SK-N-SH (cell line): ENCODE measurements at regions of chr15 and their contacts with region 1.

Region 1: DNA sequence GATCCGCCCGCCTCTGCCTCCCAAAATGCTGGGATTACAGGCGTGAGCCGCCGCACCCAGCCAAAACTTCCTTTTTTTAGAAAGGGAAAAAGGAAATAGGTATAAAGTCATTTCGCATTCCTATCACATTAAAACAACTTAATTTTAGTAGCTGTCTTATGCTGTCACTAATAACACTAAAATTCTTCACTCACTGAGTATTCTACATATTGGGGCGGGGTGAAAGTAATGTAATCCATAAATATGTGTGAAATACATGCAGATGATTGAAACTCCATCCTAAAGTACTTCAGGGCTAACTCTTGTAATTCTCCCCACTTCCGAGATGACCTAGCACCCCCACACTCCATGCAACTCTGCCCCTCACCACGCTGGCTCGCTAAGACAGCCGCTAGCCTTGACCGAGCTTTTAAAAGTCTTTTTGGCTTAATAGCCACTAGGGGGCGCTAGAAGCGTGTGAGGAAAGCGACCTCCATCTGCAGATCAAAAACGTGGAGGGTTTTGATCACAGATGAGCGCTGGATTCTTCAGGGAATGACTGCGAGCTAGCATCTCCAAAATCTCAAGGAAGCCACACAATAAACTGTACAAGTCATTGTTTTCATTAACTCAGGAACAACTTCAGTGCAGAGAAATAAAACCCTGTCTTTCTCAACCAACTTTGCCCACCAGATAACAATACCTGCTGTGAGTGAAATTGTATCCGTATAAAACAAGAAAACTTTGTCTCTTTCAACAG is 129.3 kb upstream of the IGF1R start:
- DNase-seq: peak; percentile 79
- H3K4me3 ChIP-seq: peak overlapping the region in 1 of 2 experiments; percentile 49; a peak in 2 of 4 replicates
- H3K27ac ChIP-seq: no peak overlapping the region
- H3K4me1 ChIP-seq: no peaks in the 10 kb centered on the region
- H3K27me3 ChIP-seq: no peaks in the 10 kb centered on the region
- CTCF ChIP-seq: peak; percentile 85
- EP300 ChIP-seq: no peak
- RAD21 ChIP-seq: peak; percentile 86

Region 2: DNA sequence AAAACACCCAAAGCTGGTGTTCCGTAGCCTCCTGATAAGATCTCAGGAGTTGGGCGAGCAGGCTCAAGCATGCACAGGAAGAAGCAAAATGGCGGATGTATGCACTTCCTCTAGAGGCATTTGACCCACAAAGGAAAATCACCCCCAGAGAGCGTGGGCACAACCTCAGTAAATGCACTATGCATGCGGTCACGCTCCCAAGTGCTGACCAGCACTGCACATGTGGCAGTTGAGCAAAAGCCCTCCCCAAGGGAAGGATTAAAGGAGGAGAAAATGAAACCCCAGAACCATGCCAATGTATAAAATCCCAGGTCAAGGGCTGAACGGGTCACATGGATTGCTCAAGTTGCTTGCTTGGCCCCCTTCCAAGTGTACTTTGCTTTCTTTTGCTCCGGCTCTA is 160.0 kb before region 1 on chr15:
- CTCF ChIA-PET with region 1: no interaction called
- POLR2A ChIA-PET with region 1: no interaction called
- DNase-seq: no peak
- H3K4me3 ChIP-seq: no peak overlapping the region
- H3K27ac ChIP-seq: no peak overlapping the region
- H3K4me1 ChIP-seq: no peaks in the 10 kb centered on the region
- H3K27me3 ChIP-seq: no peaks in the 10 kb centered on the region
- CTCF ChIP-seq: no peak
- EP300 ChIP-seq: no peak
- RAD21 ChIP-seq: no peak

Region 3: DNA sequence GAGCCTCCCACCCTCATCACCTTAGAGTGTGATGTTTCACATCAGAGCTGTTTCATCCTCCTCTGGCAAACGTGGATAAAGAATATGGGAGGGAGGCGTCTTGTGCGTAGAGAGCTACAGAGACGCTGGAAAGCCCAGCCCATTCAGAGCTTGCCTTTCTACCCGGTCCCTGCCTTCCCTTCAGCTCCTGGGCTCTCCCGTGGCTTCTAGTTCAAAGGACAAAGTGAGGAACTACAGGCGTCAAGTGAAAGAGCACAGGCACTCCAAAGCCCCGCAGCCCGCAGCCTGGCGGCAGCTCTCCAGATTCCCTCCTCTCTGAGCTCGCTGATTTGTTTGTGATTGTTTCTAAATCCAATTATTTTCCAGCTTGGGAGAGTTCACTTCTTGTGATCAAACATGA is 67.8 kb before region 1 on chr15:
- CTCF ChIA-PET with region 1: no interaction called
- POLR2A ChIA-PET with region 1: no interaction called
- DNase-seq: no peak
- H3K4me3 ChIP-seq: no peak overlapping the region
- H3K27ac ChIP-seq: no peak overlapping the region
- H3K4me1 ChIP-seq: no peaks in the 10 kb centered on the region
- H3K27me3 ChIP-seq: 0 out of 2 replicates have a peak, but pooled peaks cover 10% of the 10 kb centered on the region
- CTCF ChIP-seq: no peak
- EP300 ChIP-seq: no peak
- RAD21 ChIP-seq: no peak

Region 4: GRCh38 chr15:98501192-98501591 is 17.8 kb before region 1 on chr15:
- CTCF ChIA-PET with region 1: interaction called, 12 read pairs
- POLR2A ChIA-PET with region 1: no interaction called
- DNase-seq: no peak
- H3K4me3 ChIP-seq: no peak overlapping the region
- H3K27ac ChIP-seq: no peak overlapping the region
- H3K4me1 ChIP-seq: no peaks in the 10 kb centered on the region; a peak in 1 of 4 replicates
- H3K27me3 ChIP-seq: peaks cover 6% of the 10 kb centered on the region; the same call in 1 of the 2 replicates
- CTCF ChIP-seq: no peak
- EP300 ChIP-seq: no peak
- RAD21 ChIP-seq: no peak

Region 5: DNA sequence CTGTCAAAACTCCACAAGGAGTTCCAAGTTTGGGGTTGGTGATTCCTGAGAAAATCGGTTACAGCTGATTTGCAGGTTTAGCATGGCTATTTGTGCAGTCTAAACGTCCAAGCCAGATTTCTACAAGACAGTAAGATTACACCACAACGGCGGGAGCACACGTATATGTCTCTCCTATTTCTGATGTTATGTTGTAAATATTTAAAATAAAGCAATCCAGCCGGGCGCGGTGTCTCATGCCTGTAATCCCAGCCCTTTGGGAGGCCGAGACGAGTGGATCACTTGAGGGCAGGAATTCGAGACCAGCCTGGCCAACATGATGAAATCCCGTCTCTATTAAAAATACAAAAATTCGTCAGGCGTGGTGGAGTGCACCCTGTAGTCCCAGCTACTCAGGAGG is 22.5 kb after region 1 on chr15:
- CTCF ChIA-PET with region 1: interaction called, 16 read pairs
- POLR2A ChIA-PET with region 1: no interaction called
- DNase-seq: no peak
- H3K4me3 ChIP-seq: no peak overlapping the region
- H3K27ac ChIP-seq: no peak overlapping the region
- H3K4me1 ChIP-seq: no peaks in the 10 kb centered on the region
- H3K27me3 ChIP-seq: peaks cover 25% of the 10 kb centered on the region; the same call in 1 of the 2 replicates
- CTCF ChIP-seq: no peak
- EP300 ChIP-seq: no peak
- RAD21 ChIP-seq: no peak

Region 6: DNA sequence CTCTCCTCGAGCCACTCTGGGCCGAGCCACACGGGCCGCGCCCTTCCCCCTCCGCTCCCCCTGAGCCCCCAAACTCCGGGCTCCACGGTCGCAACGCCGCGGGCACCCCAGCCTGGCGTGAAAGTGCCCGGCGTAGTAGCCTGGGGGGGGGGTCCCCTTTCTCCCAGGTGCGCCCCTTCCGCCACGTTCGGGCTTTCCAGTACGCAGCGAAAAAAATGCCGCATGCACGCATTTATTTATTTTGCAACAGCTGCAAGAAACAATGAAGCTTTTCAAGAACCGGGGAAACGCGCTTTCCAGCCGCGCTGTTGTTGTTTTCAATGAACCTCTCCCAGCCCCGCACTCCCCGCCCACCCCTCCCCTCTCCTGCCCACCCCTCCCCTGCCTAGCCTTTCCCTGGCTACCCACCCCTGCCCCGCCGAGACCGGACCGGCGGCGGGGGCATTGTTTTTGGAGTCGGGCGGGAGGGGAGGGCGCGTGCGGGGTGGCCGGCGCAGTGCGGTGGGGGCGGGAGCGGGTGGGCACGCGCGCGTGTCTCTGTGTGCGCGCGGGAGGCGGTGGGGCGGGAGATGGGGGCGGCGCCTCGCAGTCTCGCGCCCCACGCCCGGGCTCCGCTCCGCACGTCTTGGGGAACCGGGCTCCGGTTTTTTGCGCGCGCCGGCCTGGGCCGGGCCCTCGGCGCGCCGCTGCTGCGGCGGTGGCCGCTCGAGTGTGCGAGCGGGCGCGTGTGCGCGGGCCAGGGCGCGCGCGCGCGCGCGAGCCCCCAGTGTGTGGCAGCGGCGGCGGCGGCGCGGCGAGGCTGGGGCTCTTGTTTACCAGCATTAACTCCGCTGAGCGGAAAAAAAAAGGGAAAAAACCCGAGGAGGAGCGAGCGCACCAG is 129.0 kb after region 1 on chr15 and contains the start of gene IGF1R:
- CTCF ChIA-PET with region 1: interaction called, 12 read pairs
- POLR2A ChIA-PET with region 1: no interaction called
- DNase-seq: peak; percentile 94
- H3K4me3 ChIP-seq: peak within 1 kb of the TSS; percentile 78 to 92
- H3K27ac ChIP-seq: peak within 1 kb of the TSS; percentile 76 to 89
- H3K4me1 ChIP-seq: peaks cover 4 to 5% of the 10 kb centered on the region in 2 experiments; a peak in 3 of 4 replicates
- H3K27me3 ChIP-seq: peaks cover 9% of the 10 kb centered on the region; the same call in 1 of the 2 replicates
- CTCF ChIP-seq: no peak
- EP300 ChIP-seq: no peak
- RAD21 ChIP-seq: no peak
- polyA plus RNA-seq, gene IGF1R: 6.4 and 9.5 TPM in 2 replicates

Region 7: GRCh38 chr15:98760112-98760826 is 241.3 kb after region 1 on chr15:
- CTCF ChIA-PET with region 1: no interaction called
- POLR2A ChIA-PET with region 1: no interaction called
- DNase-seq: no peak
- H3K4me3 ChIP-seq: no peak overlapping the region
- H3K27ac ChIP-seq: no peak overlapping the region
- H3K4me1 ChIP-seq: peaks cover 5 to 10% of the 10 kb centered on the region in 2 experiments; a peak in 2 of 4 replicates
- H3K27me3 ChIP-seq: no peaks in the 10 kb centered on the region
- CTCF ChIP-seq: no peak
- EP300 ChIP-seq: no peak
- RAD21 ChIP-seq: no peak

Region 8: GRCh38 chr15:98845107-98845884 is 326.3 kb after region 1 on chr15:
- CTCF ChIA-PET with region 1: interaction called, 14 read pairs
- POLR2A ChIA-PET with region 1: no interaction called
- DNase-seq: no peak
- H3K4me3 ChIP-seq: no peak overlapping the region
- H3K27ac ChIP-seq: no peak overlapping the region
- H3K4me1 ChIP-seq: peaks cover 11 to 34% of the 10 kb centered on the region in 2 experiments
- H3K27me3 ChIP-seq: no peaks in the 10 kb centered on the region
- CTCF ChIP-seq: no peak
- EP300 ChIP-seq: no peak
- RAD21 ChIP-seq: no peak

Region 9: GRCh38 chr15:98881526-98882520 is 362.8 kb after region 1 on chr15:
- CTCF ChIA-PET with region 1: interaction called, 35 read pairs
- POLR2A ChIA-PET with region 1: no interaction called
- DNase-seq: peak; percentile 67
- H3K4me3 ChIP-seq: peak overlapping the region in 1 of 2 experiments; percentile 36; a peak in 1 of 4 replicates
- H3K27ac ChIP-seq: no peak overlapping the region
- H3K4me1 ChIP-seq: peaks cover 3 to 13% of the 10 kb centered on the region in 2 experiments; a peak in 2 of 4 replicates
- H3K27me3 ChIP-seq: no peaks in the 10 kb centered on the region
- CTCF ChIP-seq: peak; percentile 75
- EP300 ChIP-seq: no peak
- RAD21 ChIP-seq: peak; percentile 68

Region 10: GRCh38 chr15:99059010-99059981 is 540.3 kb after region 1 on chr15:
- CTCF ChIA-PET with region 1: interaction called, 15 read pairs
- POLR2A ChIA-PET with region 1: no interaction called
- DNase-seq: peak; percentile 93
- H3K4me3 ChIP-seq: peak overlapping the region; percentile 60 to 68
- H3K27ac ChIP-seq: peak overlapping the region; percentile 40 to 57; a peak in 3 of 4 replicates
- H3K4me1 ChIP-seq: no peaks in the 10 kb centered on the region; a peak in 1 of 4 replicates
- H3K27me3 ChIP-seq: no peaks in the 10 kb centered on the region
- CTCF ChIP-seq: peak; percentile 71
- EP300 ChIP-seq: no peak; a peak in 1 of 4 replicates
- RAD21 ChIP-seq: peak; percentile 58; the same call in 1 of the 2 replicates